SK-N-SH (cell line): ENCODE measurements at regions of chr4 and their contacts with region 1.

Region 1: DNA sequence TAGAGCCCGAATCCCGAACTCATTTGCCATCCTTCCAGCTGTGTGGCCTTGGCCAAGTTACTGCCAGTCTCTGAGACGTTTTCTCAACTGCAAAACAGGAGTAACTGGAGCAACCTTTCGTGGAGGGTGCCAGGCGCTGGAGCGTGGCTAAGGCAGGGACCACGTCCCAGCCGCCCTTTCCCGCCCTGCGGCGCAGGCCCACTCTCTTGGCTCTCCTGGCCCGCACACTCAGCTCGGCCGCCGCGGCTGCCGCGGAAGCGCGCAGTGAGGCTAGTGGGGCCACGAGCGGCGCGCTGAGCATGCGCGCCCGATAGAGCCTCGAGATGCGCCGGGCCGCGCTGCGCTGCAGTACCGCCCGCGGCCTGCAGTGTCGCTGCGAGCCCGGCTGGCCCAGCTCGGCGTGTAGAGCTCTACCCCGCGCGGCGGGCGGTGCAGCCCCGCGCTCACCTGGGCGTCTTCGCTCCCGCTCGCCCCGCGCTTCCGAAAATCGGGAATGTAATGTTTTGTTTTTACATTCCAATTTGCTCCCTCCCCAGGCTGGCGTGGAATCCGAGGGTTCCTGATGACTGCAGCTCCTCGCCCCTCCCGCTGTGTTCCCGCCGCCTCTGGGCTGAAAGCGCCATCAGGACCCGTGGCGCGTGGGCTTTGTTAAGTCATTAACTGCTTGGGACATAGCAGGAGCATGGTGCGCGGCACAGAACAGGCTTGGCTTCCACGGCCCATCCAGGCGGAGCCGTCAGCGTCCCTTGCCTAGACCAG is 4.0 kb upstream of the ZNF518B start:
- DNase-seq: peak; percentile 92
- H3K4me3 ChIP-seq: peak overlapping the region; percentile 20 to 22; a peak in 3 of 4 replicates
- H3K27ac ChIP-seq: no peak overlapping the region
- H3K4me1 ChIP-seq: peaks cover 0 to 5% of the 10 kb centered on the region in 2 experiments; a peak in 1 of 4 replicates
- H3K27me3 ChIP-seq: no peaks in the 10 kb centered on the region; the same call in 1 of the 2 replicates
- CTCF ChIP-seq: peak; percentile 66
- EP300 ChIP-seq: no peak
- RAD21 ChIP-seq: peak; percentile 39

Region 2: DNA sequence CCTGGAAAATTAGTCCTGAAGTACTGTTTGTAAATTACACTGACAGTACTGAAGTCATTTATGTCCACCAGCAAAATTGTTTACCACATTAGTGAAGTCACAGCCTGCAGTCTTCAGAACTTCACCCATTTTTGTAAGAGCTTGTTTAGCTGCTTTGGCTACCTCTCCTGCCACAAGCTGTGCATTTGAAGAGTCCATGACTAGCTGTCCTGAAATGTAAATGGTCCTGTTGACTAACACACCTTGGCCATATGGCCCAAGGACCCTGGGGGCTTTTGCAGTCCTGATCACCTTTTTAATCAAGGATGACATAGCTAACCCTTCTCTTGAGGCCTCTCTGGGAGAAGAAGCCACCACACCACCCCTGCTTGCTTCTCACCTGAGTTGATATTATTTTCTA is 17.4 kb after region 1 on chr4:
- CTCF ChIA-PET with region 1: interaction called, 15 read pairs
- POLR2A ChIA-PET with region 1: no interaction called
- DNase-seq: no peak
- H3K4me3 ChIP-seq: no peak overlapping the region
- H3K27ac ChIP-seq: no peak overlapping the region
- H3K4me1 ChIP-seq: no peaks in the 10 kb centered on the region
- H3K27me3 ChIP-seq: no peaks in the 10 kb centered on the region; the same call in 1 of the 2 replicates
- CTCF ChIP-seq: no peak
- EP300 ChIP-seq: no peak
- RAD21 ChIP-seq: no peak

Region 3: DNA sequence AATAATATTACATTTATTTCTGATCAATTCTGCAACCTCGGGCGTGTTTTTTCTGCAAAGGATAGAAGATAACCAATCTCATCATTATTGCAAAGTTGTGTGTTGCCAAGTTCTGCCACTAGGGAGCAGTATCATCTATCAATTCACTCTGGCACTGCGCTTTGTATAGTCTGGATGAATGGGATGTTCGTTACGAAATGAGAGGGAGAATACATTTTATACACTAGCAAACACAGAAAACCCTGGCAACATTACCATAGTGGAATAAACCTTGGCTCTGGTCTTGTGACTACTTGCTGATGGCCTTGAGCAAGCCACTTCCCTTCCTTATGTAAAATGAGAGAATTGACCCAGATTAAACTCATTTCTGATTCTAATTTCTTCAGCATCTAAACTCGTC is 93.4 kb after region 1 on chr4:
- CTCF ChIA-PET with region 1: interaction called, 14 read pairs
- POLR2A ChIA-PET with region 1: no interaction called
- DNase-seq: peak; percentile 44
- H3K4me3 ChIP-seq: no peak overlapping the region
- H3K27ac ChIP-seq: no peak overlapping the region
- H3K4me1 ChIP-seq: no peaks in the 10 kb centered on the region
- H3K27me3 ChIP-seq: no peaks in the 10 kb centered on the region; the same call in 1 of the 2 replicates
- CTCF ChIP-seq: peak; percentile 87
- EP300 ChIP-seq: no peak
- RAD21 ChIP-seq: peak; percentile 73